Spleen (tissue), 13 donors: ENCODE measurements at regions of chr1 and their contacts with region 1.

Region 1: DNA sequence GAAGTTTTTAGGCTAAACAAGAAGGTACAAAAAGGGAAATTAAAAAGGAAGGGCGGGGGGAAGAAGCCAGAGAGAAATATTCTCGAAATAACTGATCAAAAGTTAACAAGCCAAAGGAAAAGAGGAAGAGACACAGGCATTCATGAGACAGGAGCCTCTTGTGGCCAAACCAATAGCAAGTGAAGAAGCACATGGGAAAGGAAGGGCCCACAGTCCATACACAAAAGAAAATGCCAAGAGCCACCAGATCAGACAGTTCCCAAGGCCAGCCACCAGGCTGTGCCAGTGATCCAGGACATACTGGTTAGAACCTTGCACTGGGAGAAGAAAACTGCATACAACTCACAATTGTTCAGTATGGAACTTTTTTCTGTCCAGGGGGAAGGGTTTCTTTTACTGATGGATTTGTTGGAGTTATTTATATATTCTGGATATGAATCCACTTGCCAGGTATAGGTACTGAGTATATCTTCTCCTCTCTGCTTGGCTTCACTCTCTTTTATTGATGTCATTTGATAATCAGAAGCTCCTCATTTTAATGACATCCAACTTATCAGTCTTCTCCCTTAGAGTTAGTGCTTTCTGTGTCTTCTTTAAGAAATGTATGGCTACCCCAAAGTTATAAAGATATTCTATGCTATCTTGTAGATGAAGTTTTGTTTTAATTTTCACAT is 76.8 kb downstream of the CD46 start:
- DNase-seq: no peak
- H3K4me3 ChIP-seq: peak overlapping the region in 1 of 8 donors; percentile 29
- H3K27ac ChIP-seq: peak overlapping the region; percentile 22 to 98 (median 95)
- H3K4me1 ChIP-seq: peaks cover 78 to 100% (median 95%) of the 10 kb centered on the region in 6 donors
- H3K27me3 ChIP-seq: no peaks in the 10 kb centered on the region
- CTCF ChIP-seq: peak; percentile 66 to 97 (median 87)
- POLR2A ChIP-seq: no peak

Region 2: DNA sequence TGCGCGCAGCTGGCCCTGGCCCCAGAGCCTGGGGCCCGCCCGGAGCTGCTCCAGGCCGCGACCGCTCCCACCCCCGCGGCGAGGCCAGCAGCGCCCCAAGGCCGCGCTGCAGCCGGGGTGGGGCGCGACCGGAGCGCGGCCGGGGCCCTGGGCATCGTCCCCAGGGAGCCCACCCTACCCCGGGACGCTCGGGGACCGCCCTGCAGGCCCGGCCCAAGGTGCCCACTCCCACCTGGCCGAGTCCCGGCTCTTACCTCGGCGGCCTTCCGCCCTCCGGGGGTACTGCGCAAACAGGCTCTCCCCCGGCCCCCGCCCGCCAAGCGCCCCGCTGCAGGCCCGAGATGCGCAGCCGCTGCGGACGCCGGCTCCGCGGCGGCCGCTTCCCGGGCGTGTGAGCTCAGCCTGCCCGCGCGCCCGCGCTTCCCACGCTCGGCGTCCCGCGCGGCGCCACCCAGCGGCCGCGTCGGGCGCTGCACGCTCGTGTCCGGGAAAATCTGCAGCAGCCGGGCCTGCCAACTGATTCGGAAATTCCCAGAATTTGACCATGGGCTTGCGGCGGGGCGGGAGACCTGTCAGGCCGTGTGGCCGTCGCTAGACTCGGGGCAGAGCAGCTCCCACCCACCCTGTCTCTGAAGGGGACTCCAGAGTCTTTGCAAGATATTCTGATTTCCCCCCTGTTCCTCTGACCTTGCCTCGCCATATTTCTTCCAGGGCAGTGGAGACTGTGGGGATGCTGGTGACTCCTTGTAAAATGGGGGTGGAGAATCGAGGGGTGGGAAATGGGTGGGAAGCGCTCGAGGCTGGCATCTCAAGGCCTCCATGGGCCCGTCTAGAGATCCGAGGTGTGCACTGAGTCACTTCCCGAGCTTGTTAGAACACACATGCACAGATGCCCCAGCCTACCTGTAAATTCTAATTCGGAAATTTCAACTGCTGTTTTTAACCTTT is 40.4 kb after region 1 on chr1:
- intact Hi-C with region 1: loop called (anchors 5 kb)
- DNase-seq: peak; percentile 95
- H3K4me3 ChIP-seq: peak overlapping the region; percentile 76 to 97 (median 88)
- H3K27ac ChIP-seq: peak overlapping the region; percentile 87 to 99 (median 98)
- H3K4me1 ChIP-seq: peaks cover 51 to 93% (median 87%) of the 10 kb centered on the region in 6 donors
- H3K27me3 ChIP-seq: no peaks in the 10 kb centered on the region
- CTCF ChIP-seq: peak; percentile 70 to 93 (median 87)
- POLR2A ChIP-seq: peak in 1 of 3 donors; percentile 73